ENCODE measurements at regions of chr5 and their contacts with region 1.

Region 1: GRCh38 chr5:72611118-72611730 is 104.0 kb upstream of the ZNF366 start:
- DNase-seq: peak; percentile 46
- H3K4me3 ChIP-seq: no peak overlapping the region
- H3K27ac ChIP-seq: no peak overlapping the region
- H3K27me3 ChIP-seq: no peaks in the 10 kb centered on the region
- CTCF ChIP-seq: peak; percentile 99

Region 2: GRCh38 chr5:72366324-72366976 is 244.8 kb before region 1 on chr5:
- CTCF ChIA-PET with region 1: interaction called, 15 read pairs
- POLR2A ChIA-PET with region 1: no interaction called
- DNase-seq: peak; percentile 61
- H3K4me3 ChIP-seq: no peak overlapping the region
- H3K27ac ChIP-seq: no peak overlapping the region
- H3K27me3 ChIP-seq: no peaks in the 10 kb centered on the region
- CTCF ChIP-seq: peak; percentile 83

Region 3: GRCh38 chr5:72440207-72440638 is 171.0 kb before region 1 on chr5:
- CTCF ChIA-PET with region 1: no interaction called
- POLR2A ChIA-PET with region 1: no interaction called
- DNase-seq: no peak
- H3K4me3 ChIP-seq: no peak overlapping the region
- H3K27ac ChIP-seq: no peak overlapping the region
- H3K27me3 ChIP-seq: no peaks in the 10 kb centered on the region
- CTCF ChIP-seq: no peak

Region 4: GRCh38 chr5:72451741-72452505 is 159.3 kb before region 1 on chr5:
- CTCF ChIA-PET with region 1: no interaction called
- POLR2A ChIA-PET with region 1: no interaction called
- DNase-seq: no peak
- H3K4me3 ChIP-seq: no peak overlapping the region
- H3K27ac ChIP-seq: peak overlapping the region; percentile 91
- H3K27me3 ChIP-seq: no peaks in the 10 kb centered on the region
- CTCF ChIP-seq: no peak

Region 5: GRCh38 chr5:72552041-72552557 is 59.1 kb before region 1 on chr5:
- CTCF ChIA-PET with region 1: no interaction called
- POLR2A ChIA-PET with region 1: no interaction called
- DNase-seq: no peak
- H3K4me3 ChIP-seq: no peak overlapping the region
- H3K27ac ChIP-seq: no peak overlapping the region
- H3K27me3 ChIP-seq: no peaks in the 10 kb centered on the region
- CTCF ChIP-seq: no peak

Region 6: DNA sequence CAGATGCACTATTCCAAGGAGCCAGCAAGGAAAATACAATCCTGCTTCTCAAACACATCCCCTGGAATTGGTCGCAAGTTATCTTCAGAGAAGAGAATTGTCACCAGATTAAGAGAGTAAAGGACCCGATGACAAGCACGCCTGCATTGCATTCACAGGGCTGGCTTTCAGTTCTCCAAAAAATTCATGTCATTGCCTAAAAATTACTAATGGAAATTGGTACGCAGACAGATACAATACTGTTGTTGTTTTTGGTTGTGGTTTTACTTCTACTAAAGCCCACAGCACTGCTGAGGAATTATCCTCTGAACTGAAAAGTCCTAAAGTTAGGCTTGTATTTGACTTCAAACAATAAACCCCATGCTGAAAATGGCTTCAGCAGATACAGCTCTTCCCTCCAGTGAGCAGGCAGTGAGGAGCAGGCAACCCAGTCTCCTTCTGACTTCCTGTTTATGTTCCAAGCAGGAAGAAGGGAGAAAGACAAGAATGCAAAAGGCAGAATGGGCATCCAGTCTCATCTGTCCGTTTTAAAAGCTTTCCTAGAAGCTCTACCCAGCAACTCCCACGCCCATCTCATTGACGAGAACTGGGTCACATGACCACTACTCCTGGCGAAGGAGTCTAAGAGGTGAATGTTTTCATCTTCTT is 23.4 kb before region 1 on chr5:
- CTCF ChIA-PET with region 1: interaction called, 12 read pairs
- POLR2A ChIA-PET with region 1: no interaction called
- DNase-seq: no peak
- H3K4me3 ChIP-seq: no peak overlapping the region
- H3K27ac ChIP-seq: no peak overlapping the region
- H3K27me3 ChIP-seq: no peaks in the 10 kb centered on the region
- CTCF ChIP-seq: no peak

Region 7: GRCh38 chr5:72597456-72597948 is 13.7 kb before region 1 on chr5:
- CTCF ChIA-PET with region 1: interaction called, 42 read pairs
- POLR2A ChIA-PET with region 1: no interaction called
- DNase-seq: peak; percentile 68
- H3K4me3 ChIP-seq: no peak overlapping the region
- H3K27ac ChIP-seq: peak overlapping the region; percentile 68
- H3K27me3 ChIP-seq: no peaks in the 10 kb centered on the region
- CTCF ChIP-seq: no peak

Region 8: DNA sequence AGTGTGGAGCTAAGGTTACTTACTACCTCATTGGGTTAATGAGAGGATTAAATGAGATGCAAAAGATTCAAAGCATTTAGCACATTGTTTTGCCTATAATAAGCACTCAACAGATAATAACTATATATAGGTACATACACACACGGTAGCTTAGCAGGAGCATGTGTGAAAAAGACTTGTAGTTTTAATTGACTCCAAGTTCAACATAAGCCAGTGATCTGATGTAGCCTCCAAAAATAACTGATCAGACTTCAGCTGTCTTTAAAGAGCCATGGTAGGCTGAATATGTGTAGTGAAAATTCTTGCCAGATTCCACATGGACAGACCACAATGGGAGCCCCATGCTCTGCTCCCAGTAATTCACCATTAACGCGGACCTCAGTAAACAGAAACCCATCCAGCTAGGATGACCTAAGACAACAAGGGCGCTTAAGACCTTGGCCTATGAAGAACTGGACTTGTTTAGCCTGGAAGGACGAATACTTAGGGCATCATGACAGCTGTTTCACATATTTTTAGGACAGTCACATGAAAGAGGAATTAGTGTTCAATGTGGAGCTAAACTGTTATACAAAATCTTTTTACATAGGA is 11.0 kb after region 1 on chr5:
- CTCF ChIA-PET with region 1: interaction called, 32 read pairs
- POLR2A ChIA-PET with region 1: no interaction called
- DNase-seq: no peak
- H3K4me3 ChIP-seq: no peak overlapping the region
- H3K27ac ChIP-seq: no peak overlapping the region
- H3K27me3 ChIP-seq: no peaks in the 10 kb centered on the region
- CTCF ChIP-seq: no peak

Region 9: DNA sequence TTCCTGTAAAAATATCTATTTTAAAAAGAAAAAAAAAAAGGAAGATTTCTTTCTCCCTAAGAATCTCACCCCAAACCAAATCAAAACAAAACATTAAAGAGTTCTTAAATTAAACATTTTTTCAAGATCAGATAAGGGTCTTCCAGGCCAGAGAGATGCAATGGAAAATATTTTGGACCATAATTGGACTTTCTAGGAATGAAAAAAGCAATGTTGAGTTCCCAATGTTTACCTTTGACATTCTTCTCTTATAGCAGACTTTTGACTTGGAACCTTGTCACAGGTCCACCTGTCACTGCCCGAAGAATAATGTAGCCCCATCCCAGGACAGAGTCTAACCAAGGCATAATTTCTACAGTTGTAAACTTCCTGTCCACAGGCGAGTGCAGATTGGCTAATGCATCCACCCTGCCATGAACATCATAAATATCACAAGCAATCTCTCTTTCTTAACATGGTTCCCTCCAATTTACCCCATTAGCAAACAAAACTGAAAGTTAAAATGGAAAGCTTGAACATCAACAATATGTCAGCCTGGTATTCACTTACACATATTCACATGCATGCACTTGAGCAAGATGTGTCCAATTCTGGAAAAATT is 17.6 kb after region 1 on chr5:
- CTCF ChIA-PET with region 1: interaction called, 32 read pairs
- POLR2A ChIA-PET with region 1: no interaction called
- DNase-seq: no peak
- H3K4me3 ChIP-seq: no peak overlapping the region
- H3K27ac ChIP-seq: no peak overlapping the region
- H3K27me3 ChIP-seq: no peaks in the 10 kb centered on the region
- CTCF ChIP-seq: no peak

Region 10: DNA sequence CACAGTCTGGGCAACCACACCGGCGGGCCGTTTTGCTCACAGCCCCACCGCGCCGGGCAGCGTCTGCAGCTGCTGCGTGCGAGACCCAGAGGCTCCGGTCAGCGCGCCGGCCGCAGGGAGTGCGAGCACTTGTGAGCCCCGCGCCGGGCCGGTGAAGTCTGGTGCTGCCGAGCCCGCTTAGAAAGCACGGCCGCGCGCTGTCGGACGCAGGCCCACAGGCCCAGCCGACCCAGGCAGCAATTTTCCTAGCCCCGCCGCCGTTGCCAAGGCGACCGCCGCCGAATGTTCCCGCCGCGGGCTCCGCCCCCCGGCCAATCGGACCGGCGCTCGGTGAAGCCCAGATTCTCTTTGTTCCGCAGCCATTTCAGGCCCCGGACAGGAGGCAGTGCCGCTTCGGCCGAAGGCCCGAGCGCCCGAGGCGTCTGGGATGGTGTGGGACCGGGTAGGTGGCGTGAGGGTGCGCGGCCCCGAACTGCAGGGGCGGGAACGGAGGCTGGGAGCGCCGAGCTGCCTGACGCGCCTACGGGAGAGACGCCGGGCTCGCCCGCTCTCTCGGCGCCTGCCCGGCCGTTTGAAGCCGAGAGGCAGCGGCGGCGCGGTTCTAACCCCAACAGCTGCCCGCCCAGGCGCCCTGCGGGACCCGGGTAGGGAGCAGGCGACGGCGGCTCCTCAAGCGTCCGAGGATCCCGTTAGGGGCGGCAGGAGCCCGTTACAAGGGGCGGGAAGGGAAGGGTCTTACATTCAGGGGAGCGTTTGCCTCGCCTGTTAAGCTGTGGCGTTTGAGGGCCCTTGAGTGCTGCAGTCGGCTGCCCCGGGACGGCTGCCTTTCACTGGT is 205.3 kb after region 1 on chr5 and contains the start of gene TNPO1:
- CTCF ChIA-PET with region 1: interaction called, 17 read pairs
- POLR2A ChIA-PET with region 1: no interaction called
- DNase-seq: peak; percentile 79
- H3K4me3 ChIP-seq: peak within 1 kb of the TSS; percentile 74
- H3K27ac ChIP-seq: peak within 1 kb of the TSS; percentile 98
- H3K27me3 ChIP-seq: no peaks in the 10 kb centered on the region
- CTCF ChIP-seq: no peak
- polyA plus RNA-seq, gene TNPO1: 110 and 134 TPM in 2 replicates

Measured in AG04450 (cell line).